H1 (cell line): ENCODE measurements at regions of chr11 and their contacts with region 1.

Region 1: GRCh38 chr11:120660024-120660565 is 148.5 kb downstream of the GRIK4 start:
- DNase-seq: peak in 1 of 2 experiments; percentile 87
- H3K4me3 ChIP-seq: no peak overlapping the region
- H3K27ac ChIP-seq: no peak overlapping the region
- H3K4me1 ChIP-seq: peaks cover 3 to 6% (median 4%) of the 10 kb centered on the region in 4 experiments; a peak in 5 of 7 replicates
- H3K27me3 ChIP-seq: no peaks in the 10 kb centered on the region; a peak in 2 of 7 replicates
- CTCF ChIP-seq: peak; percentile 79 to 83 (median 81)
- EP300 ChIP-seq: no peak
- POLR2A ChIP-seq: no peak
- RAD21 ChIP-seq: peak; percentile 65 to 76

Region 2: GRCh38 chr11:120432056-120433018 is 227.8 kb before region 1 on chr11:
- CTCF ChIA-PET with region 1: no interaction called
- POLR2A ChIA-PET with region 1: no interaction called
- DNase-seq: no peak
- H3K4me3 ChIP-seq: no peak overlapping the region
- H3K27ac ChIP-seq: no peak overlapping the region
- H3K4me1 ChIP-seq: no peaks in the 10 kb centered on the region
- H3K27me3 ChIP-seq: no peaks in the 10 kb centered on the region
- CTCF ChIP-seq: no peak
- EP300 ChIP-seq: no peak
- POLR2A ChIP-seq: no peak
- RAD21 ChIP-seq: no peak

Region 3: DNA sequence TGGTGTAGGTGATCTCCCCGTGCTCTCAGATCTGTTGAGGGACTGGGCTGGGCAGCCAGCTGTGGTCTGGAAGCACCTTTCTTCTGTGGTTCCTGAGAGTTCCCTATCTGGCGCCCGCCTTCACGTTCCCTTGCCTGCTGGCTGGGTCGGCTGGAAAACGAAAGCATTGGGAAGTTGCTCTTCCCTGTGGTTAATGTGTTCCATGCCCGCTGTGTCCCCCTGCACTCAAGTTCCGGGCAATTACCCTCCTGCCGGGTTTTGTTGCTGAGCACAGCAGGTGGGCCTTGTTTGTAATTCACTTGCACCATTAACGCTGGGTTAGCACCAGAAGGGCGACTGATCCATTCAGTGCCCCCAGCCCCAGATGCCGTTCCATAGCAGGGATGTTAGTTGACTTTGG is 14.5 kb before region 1 on chr11:
- CTCF ChIA-PET with region 1: interaction called, 19 read pairs
- POLR2A ChIA-PET with region 1: no interaction called
- DNase-seq: peak; percentile 86 to 90
- H3K4me3 ChIP-seq: peak overlapping the region in 2 of 4 experiments; percentile 1 to 24; a peak in 1 of 8 replicates
- H3K27ac ChIP-seq: no peak overlapping the region
- H3K4me1 ChIP-seq: peaks cover 7 to 20% (median 11%) of the 10 kb centered on the region in 4 experiments
- H3K27me3 ChIP-seq: peaks cover 52 to 92% (median 82%) of the 10 kb centered on the region in 4 experiments
- CTCF ChIP-seq: no peak
- EP300 ChIP-seq: peak in 1 of 2 experiments; percentile 94; a peak in 2 of 3 replicates
- POLR2A ChIP-seq: no peak
- RAD21 ChIP-seq: peak in 1 of 2 experiments; percentile 26; a peak in 2 of 4 replicates

Region 4: GRCh38 chr11:120682866-120683265 is 22.8 kb after region 1 on chr11:
- CTCF ChIA-PET with region 1: interaction called, 26 read pairs
- POLR2A ChIA-PET with region 1: no interaction called
- DNase-seq: no peak
- H3K4me3 ChIP-seq: no peak overlapping the region
- H3K27ac ChIP-seq: no peak overlapping the region
- H3K4me1 ChIP-seq: peaks cover 0 to 10% (median 5%) of the 10 kb centered on the region in 4 experiments; a peak in 5 of 7 replicates
- H3K27me3 ChIP-seq: no peaks in the 10 kb centered on the region
- CTCF ChIP-seq: no peak
- EP300 ChIP-seq: no peak
- POLR2A ChIP-seq: no peak
- RAD21 ChIP-seq: no peak

Region 5: GRCh38 chr11:120710354-120711131 is 50.4 kb after region 1 on chr11:
- CTCF ChIA-PET with region 1: interaction called, 11 read pairs
- POLR2A ChIA-PET with region 1: no interaction called
- DNase-seq: peak; percentile 55 to 56
- H3K4me3 ChIP-seq: no peak overlapping the region; a peak in 1 of 8 replicates
- H3K27ac ChIP-seq: no peak overlapping the region
- H3K4me1 ChIP-seq: peaks cover 0 to 8% (median 4%) of the 10 kb centered on the region in 4 experiments; a peak in 3 of 7 replicates
- H3K27me3 ChIP-seq: no peaks in the 10 kb centered on the region; a peak in 2 of 7 replicates
- CTCF ChIP-seq: no peak
- EP300 ChIP-seq: no peak
- POLR2A ChIP-seq: no peak
- RAD21 ChIP-seq: no peak